B cell (primary cell): ENCODE measurements at regions of chr11 and their contacts with region 1.

Region 1: GRCh38 chr11:304915-305843 is 2.4 kb upstream of the IFITM2 start:
- DNase-seq: peak; percentile 71
- ATAC-seq: peak; percentile 37
- H3K4me3 ChIP-seq: no peak overlapping the region
- H3K4me3 Mint-ChIP-seq: no peak overlapping the region
- H3K27ac ChIP-seq: no peak overlapping the region
- H3K27ac Mint-ChIP-seq: peak overlapping the region; percentile 73
- H3K4me1 ChIP-seq: peaks cover 28 to 56% of the 10 kb centered on the region in 2 donors
- H3K4me1 Mint-ChIP-seq: peaks cover 52% of the 10 kb centered on the region
- H3K27me3 ChIP-seq: peaks cover 0 to 2% (median 0%) of the 10 kb centered on the region in 4 experiments
- H3K27me3 Mint-ChIP-seq: no peaks in the 10 kb centered on the region
- CTCF ChIP-seq: peak; percentile 67

Region 2: DNA sequence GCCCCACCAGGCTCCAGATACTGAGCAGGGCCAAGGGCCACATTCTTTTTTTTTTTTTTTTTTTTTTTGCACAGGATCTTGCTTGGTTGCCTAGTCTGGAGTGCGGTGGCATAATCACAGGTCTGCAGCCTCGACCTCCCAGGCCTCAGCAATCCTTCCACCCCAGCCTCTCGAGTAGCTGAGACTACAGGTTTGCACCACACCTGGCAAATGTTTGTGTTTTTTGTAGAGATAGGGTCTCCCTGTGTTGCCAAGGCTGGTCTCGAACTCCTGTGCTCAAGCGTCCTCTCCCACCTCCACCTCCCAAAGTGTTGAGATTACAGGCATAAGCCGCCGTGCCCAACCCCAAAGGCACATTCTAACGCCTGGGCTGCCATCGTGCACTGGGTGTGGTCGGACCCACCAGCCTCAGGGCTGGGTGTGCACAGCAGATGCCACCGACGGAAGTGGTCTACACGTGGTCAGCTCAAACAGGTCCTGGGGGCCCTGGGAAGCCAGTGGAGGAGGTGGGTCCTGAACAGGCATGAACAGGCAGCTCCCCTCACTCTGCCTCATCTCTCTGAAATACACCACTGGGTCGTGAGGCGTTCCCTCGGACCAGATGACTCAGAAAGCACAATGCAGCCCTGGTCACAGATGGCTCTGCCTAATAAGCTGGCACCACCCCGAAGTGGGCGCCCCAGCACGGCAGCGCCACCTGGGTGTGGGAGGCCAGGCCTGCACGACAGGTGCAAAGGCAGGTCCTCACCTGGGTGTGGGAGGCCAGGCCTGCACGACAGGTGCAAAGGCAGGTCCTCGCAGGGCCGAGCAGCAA is 59.0 kb after region 1 on chr11:
- CTCF ChIA-PET with region 1: interaction called, 15 read pairs
- POLR2A ChIA-PET with region 1: interaction called, 3 read pairs
- intact Hi-C with region 1: no loop called
- DNase-seq: peak; percentile 65
- ATAC-seq: peak; percentile 83
- H3K4me3 ChIP-seq: no peak overlapping the region
- H3K4me3 Mint-ChIP-seq: no peak overlapping the region
- H3K27ac ChIP-seq: no peak overlapping the region
- H3K27ac Mint-ChIP-seq: no peak overlapping the region
- H3K4me1 ChIP-seq: peaks cover 8 to 14% of the 10 kb centered on the region in 2 donors
- H3K4me1 Mint-ChIP-seq: peaks cover 11% of the 10 kb centered on the region
- H3K27me3 ChIP-seq: peaks cover 0 to 38% (median 15%) of the 10 kb centered on the region in 4 experiments
- H3K27me3 Mint-ChIP-seq: peaks cover 24% of the 10 kb centered on the region
- CTCF ChIP-seq: peak; percentile 69

Region 3: GRCh38 chr11:396948-397548 is 91.9 kb after region 1 on chr11:
- CTCF ChIA-PET with region 1: interaction called, 11 read pairs
- POLR2A ChIA-PET with region 1: no interaction called
- intact Hi-C with region 1: no loop called
- DNase-seq: peak; percentile 78
- ATAC-seq: peak; percentile 96
- H3K4me3 ChIP-seq: peak overlapping the region in 4 of 5 experiments; percentile 33 to 56 (median 53)
- H3K4me3 Mint-ChIP-seq: peak overlapping the region; percentile 57
- H3K27ac ChIP-seq: no peak overlapping the region
- H3K27ac Mint-ChIP-seq: no peak overlapping the region
- H3K4me1 ChIP-seq: peaks cover 12 to 15% of the 10 kb centered on the region in 2 donors
- H3K4me1 Mint-ChIP-seq: peaks cover 3% of the 10 kb centered on the region
- H3K27me3 ChIP-seq: peaks cover 0 to 9% (median 0%) of the 10 kb centered on the region in 4 experiments
- H3K27me3 Mint-ChIP-seq: no peaks in the 10 kb centered on the region
- CTCF ChIP-seq: peak; percentile 25

Region 4: DNA sequence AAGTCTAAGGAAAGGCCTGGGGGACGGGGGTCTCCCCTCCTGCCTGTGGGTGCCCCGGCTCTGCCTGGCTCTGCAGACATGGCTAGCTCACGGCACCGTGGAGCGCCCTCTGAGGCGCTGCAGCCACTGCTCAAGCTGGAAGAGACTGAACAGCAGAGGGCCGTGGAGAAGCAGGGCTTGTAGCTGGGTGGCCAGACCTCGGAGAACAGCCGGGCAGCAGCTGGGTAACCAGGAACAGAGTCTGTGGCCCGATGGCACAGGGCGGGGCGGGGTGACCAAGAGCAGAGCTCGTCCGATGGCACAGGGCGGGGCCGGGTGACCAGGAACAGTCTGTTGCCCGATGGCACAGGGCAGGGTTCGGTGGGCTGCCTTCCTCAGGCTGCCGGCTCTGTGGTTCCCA is 183.8 kb after region 1 on chr11:
- CTCF ChIA-PET with region 1: no interaction called
- POLR2A ChIA-PET with region 1: no interaction called
- intact Hi-C with region 1: no loop called
- DNase-seq: no peak
- ATAC-seq: no peak
- H3K4me3 ChIP-seq: no peak overlapping the region
- H3K4me3 Mint-ChIP-seq: no peak overlapping the region
- H3K27ac ChIP-seq: no peak overlapping the region
- H3K27ac Mint-ChIP-seq: no peak overlapping the region
- H3K4me1 ChIP-seq: no peaks in the 10 kb centered on the region
- H3K4me1 Mint-ChIP-seq: no peaks in the 10 kb centered on the region
- H3K27me3 ChIP-seq: no peaks in the 10 kb centered on the region
- H3K27me3 Mint-ChIP-seq: no peaks in the 10 kb centered on the region
- CTCF ChIP-seq: no peak

Region 5: GRCh38 chr11:506238-506994 is 201.2 kb after region 1 on chr11:
- CTCF ChIA-PET with region 1: no interaction called
- POLR2A ChIA-PET with region 1: no interaction called
- intact Hi-C with region 1: no loop called
- DNase-seq: peak; percentile 97
- ATAC-seq: peak; percentile 70
- H3K4me3 ChIP-seq: peak overlapping the region; percentile 38 to 100 (median 98)
- H3K4me3 Mint-ChIP-seq: peak overlapping the region; percentile 99
- H3K27ac ChIP-seq: peak overlapping the region; percentile 100
- H3K27ac Mint-ChIP-seq: peak overlapping the region; percentile 100
- H3K4me1 ChIP-seq: peaks cover 28 to 45% of the 10 kb centered on the region in 2 donors
- H3K4me1 Mint-ChIP-seq: peaks cover 38% of the 10 kb centered on the region
- H3K27me3 ChIP-seq: peaks cover 0 to 10% (median 0%) of the 10 kb centered on the region in 4 experiments
- H3K27me3 Mint-ChIP-seq: no peaks in the 10 kb centered on the region
- CTCF ChIP-seq: no peak